Activated naive CD4-positive, alpha-beta T cell treated with anti-CD3 and anti-CD28 coated beads, Interleukin-2, amount 10 ng/mL, durations not matched to agents 7 days and 5 days (primary cell): ENCODE measurements at regions of chr7 and their contacts with region 1.

Region 1: GRCh38 chr7:116588641-116589594 is 64.1 kb downstream of the CAV1 start:
- DNase-seq: no peak
- H3K4me3 Mint-ChIP-seq: no peak overlapping the region
- H3K27ac Mint-ChIP-seq: no peak overlapping the region
- H3K4me1 Mint-ChIP-seq: peaks cover 22% of the 10 kb centered on the region
- H3K27me3 Mint-ChIP-seq: peaks cover 17% of the 10 kb centered on the region

Region 2: GRCh38 chr7:116173051-116174028 is 415.6 kb before region 1 on chr7:
- CTCF ChIA-PET with region 1: interaction called, 26 read pairs
- DNase-seq: peak; percentile 30
- H3K4me3 Mint-ChIP-seq: no peak overlapping the region
- H3K27ac Mint-ChIP-seq: no peak overlapping the region
- H3K4me1 Mint-ChIP-seq: peaks cover 9% of the 10 kb centered on the region
- H3K27me3 Mint-ChIP-seq: peaks cover 21% of the 10 kb centered on the region

Region 3: GRCh38 chr7:116258734-116259133 is 330.2 kb before region 1 on chr7:
- CTCF ChIA-PET with region 1: interaction called, 23 read pairs
- DNase-seq: peak; percentile 33
- H3K4me3 Mint-ChIP-seq: no peak overlapping the region
- H3K27ac Mint-ChIP-seq: no peak overlapping the region
- H3K4me1 Mint-ChIP-seq: peaks cover 10% of the 10 kb centered on the region
- H3K27me3 Mint-ChIP-seq: peaks cover 5% of the 10 kb centered on the region

Region 4: GRCh38 chr7:116601426-116601825 is 12.5 kb after region 1 on chr7:
- CTCF ChIA-PET with region 1: interaction called, 28 read pairs
- DNase-seq: peak; percentile 26
- H3K4me3 Mint-ChIP-seq: no peak overlapping the region
- H3K27ac Mint-ChIP-seq: no peak overlapping the region
- H3K4me1 Mint-ChIP-seq: peaks cover 8% of the 10 kb centered on the region
- H3K27me3 Mint-ChIP-seq: peaks cover 12% of the 10 kb centered on the region

Region 5: DNA sequence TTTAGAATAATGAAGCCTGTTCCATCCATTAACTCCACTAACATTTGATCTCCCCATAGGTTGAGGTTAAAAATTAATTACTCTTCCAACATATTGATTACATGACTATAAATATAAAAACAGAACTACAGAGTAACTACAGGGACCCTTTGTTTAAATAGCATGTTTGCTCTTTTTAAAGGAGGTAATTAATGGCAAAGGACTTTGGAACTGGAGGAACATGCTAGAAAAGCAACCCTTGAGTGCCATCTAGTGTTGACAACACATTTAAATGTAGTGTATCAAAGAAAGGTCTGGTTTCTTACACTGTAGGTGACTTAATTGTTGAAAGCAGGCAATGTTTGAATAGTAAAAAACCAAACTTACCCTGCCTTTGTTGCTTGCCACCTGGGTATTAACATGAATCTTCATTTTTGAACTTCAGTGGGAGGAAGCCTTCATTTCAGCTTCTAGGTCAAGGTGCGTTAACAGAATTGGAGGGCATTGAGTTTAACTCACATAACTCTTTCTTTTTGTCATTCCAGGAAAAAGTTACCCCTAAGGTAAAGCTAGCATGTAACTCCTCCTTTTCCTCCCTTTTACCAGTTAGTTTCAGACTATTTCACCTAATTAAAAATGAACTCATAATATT is 220.8 kb after region 1 on chr7:
- CTCF ChIA-PET with region 1: interaction called, 33 read pairs
- DNase-seq: peak; percentile 24
- H3K4me3 Mint-ChIP-seq: no peak overlapping the region
- H3K27ac Mint-ChIP-seq: no peak overlapping the region
- H3K4me1 Mint-ChIP-seq: no peaks in the 10 kb centered on the region
- H3K27me3 Mint-ChIP-seq: peaks cover 7% of the 10 kb centered on the region